ENCODE measurements at regions of chr5 and their contacts with region 1.

Region 1: GRCh38 chr5:39177631-39177964 is 41.8 kb downstream of the FYB1 start:
- DNase-seq: peak in 2 of 9 experiments; percentile 73 to 86
- ATAC-seq: peak; percentile 64
- H3K4me3 ChIP-seq: peak overlapping the region; percentile 20 to 36
- H3K4me3 Mint-ChIP-seq: peak overlapping the region; percentile 63
- H3K27ac ChIP-seq: peak overlapping the region; percentile 62 to 76
- H3K27ac Mint-ChIP-seq: peak overlapping the region; percentile 96
- H3K4me1 ChIP-seq: peaks cover 96% of the 10 kb centered on the region
- H3K4me1 Mint-ChIP-seq: peaks cover 96% of the 10 kb centered on the region
- H3K27me3 ChIP-seq: no peaks in the 10 kb centered on the region
- H3K27me3 Mint-ChIP-seq: no peaks in the 10 kb centered on the region
- CTCF ChIP-seq: no peak

Region 2: GRCh38 chr5:39158127-39158593 is 19.4 kb before region 1 on chr5:
- CTCF ChIA-PET with region 1: interaction called, 3 read pairs
- POLR2A ChIA-PET with region 1: interaction called, 13 read pairs
- intact Hi-C with region 1: loop called (anchors 2 kb)
- DNase-seq: no peak
- ATAC-seq: no peak
- H3K4me3 ChIP-seq: no peak overlapping the region
- H3K4me3 Mint-ChIP-seq: peak overlapping the region; percentile 16
- H3K27ac ChIP-seq: no peak overlapping the region
- H3K27ac Mint-ChIP-seq: peak overlapping the region; percentile 86
- H3K4me1 ChIP-seq: peaks cover 83% of the 10 kb centered on the region
- H3K4me1 Mint-ChIP-seq: peaks cover 86% of the 10 kb centered on the region
- H3K27me3 ChIP-seq: no peaks in the 10 kb centered on the region
- H3K27me3 Mint-ChIP-seq: no peaks in the 10 kb centered on the region
- CTCF ChIP-seq: no peak

Region 3: GRCh38 chr5:39164529-39165402 is 12.8 kb before region 1 on chr5:
- CTCF ChIA-PET with region 1: interaction called, 5 read pairs
- POLR2A ChIA-PET with region 1: interaction called, 13 read pairs
- intact Hi-C with region 1: loop called (anchors 1 kb)
- DNase-seq: peak in 2 of 9 experiments; percentile 56 to 70
- ATAC-seq: peak; percentile 73
- H3K4me3 ChIP-seq: no peak overlapping the region
- H3K4me3 Mint-ChIP-seq: peak overlapping the region; percentile 55
- H3K27ac ChIP-seq: peak overlapping the region; percentile 9 to 65
- H3K27ac Mint-ChIP-seq: peak overlapping the region; percentile 91
- H3K4me1 ChIP-seq: peaks cover 93% of the 10 kb centered on the region
- H3K4me1 Mint-ChIP-seq: peaks cover 90% of the 10 kb centered on the region
- H3K27me3 ChIP-seq: no peaks in the 10 kb centered on the region
- H3K27me3 Mint-ChIP-seq: no peaks in the 10 kb centered on the region
- CTCF ChIP-seq: no peak

Region 4: GRCh38 chr5:39187831-39188731 is 10.5 kb after region 1 on chr5:
- CTCF ChIA-PET with region 1: interaction called, 17 read pairs
- POLR2A ChIA-PET with region 1: interaction called, 183 read pairs
- intact Hi-C with region 1: loop called (anchors 1 kb)
- DNase-seq: peak in 4 of 9 experiments; percentile 47 to 66 (median 56)
- ATAC-seq: peak; percentile 53
- H3K4me3 ChIP-seq: peak overlapping the region; percentile 6 to 29
- H3K4me3 Mint-ChIP-seq: peak overlapping the region; percentile 75
- H3K27ac ChIP-seq: peak overlapping the region; percentile 51 to 88
- H3K27ac Mint-ChIP-seq: peak overlapping the region; percentile 98
- H3K4me1 ChIP-seq: peaks cover 90% of the 10 kb centered on the region
- H3K4me1 Mint-ChIP-seq: peaks cover 90% of the 10 kb centered on the region
- H3K27me3 ChIP-seq: no peaks in the 10 kb centered on the region
- H3K27me3 Mint-ChIP-seq: no peaks in the 10 kb centered on the region
- CTCF ChIP-seq: no peak

Region 5: GRCh38 chr5:39194466-39195136 is 17.0 kb after region 1 on chr5:
- CTCF ChIA-PET with region 1: interaction called, 28 read pairs
- POLR2A ChIA-PET with region 1: interaction called, 183 read pairs
- intact Hi-C with region 1: loop called (anchors 2 kb)
- DNase-seq: peak in 1 of 9 experiments; percentile 41
- ATAC-seq: no peak
- H3K4me3 ChIP-seq: peak overlapping the region; percentile 12 to 28
- H3K4me3 Mint-ChIP-seq: peak overlapping the region; percentile 77
- H3K27ac ChIP-seq: peak overlapping the region; percentile 41 to 88
- H3K27ac Mint-ChIP-seq: peak overlapping the region; percentile 94
- H3K4me1 ChIP-seq: peaks cover 72% of the 10 kb centered on the region
- H3K4me1 Mint-ChIP-seq: peaks cover 76% of the 10 kb centered on the region
- H3K27me3 ChIP-seq: no peaks in the 10 kb centered on the region
- H3K27me3 Mint-ChIP-seq: no peaks in the 10 kb centered on the region
- CTCF ChIP-seq: no peak

Region 6: GRCh38 chr5:39202597-39203274 is 25.1 kb after region 1 on chr5:
- CTCF ChIA-PET with region 1: interaction called, 13 read pairs
- POLR2A ChIA-PET with region 1: interaction called, 47 read pairs
- intact Hi-C with region 1: no loop called
- DNase-seq: peak in 4 of 9 experiments; percentile 49 to 77 (median 64)
- ATAC-seq: peak; percentile 58
- H3K4me3 ChIP-seq: peak overlapping the region; percentile 48 to 75
- H3K4me3 Mint-ChIP-seq: peak overlapping the region; percentile 93
- H3K27ac ChIP-seq: peak overlapping the region; percentile 70 to 88
- H3K27ac Mint-ChIP-seq: peak overlapping the region; percentile 96
- H3K4me1 ChIP-seq: peaks cover 48% of the 10 kb centered on the region
- H3K4me1 Mint-ChIP-seq: peaks cover 57% of the 10 kb centered on the region
- H3K27me3 ChIP-seq: no peaks in the 10 kb centered on the region
- H3K27me3 Mint-ChIP-seq: no peaks in the 10 kb centered on the region
- CTCF ChIP-seq: no peak

Region 7: GRCh38 chr5:39209924-39210323 is 32.3 kb after region 1 on chr5:
- CTCF ChIA-PET with region 1: interaction called, 15 read pairs
- POLR2A ChIA-PET with region 1: interaction called, 43 read pairs
- intact Hi-C with region 1: loop called in 1 of 2 experiments (anchors 5 kb)
- DNase-seq: peak; percentile 61 to 94 (median 83)
- ATAC-seq: peak; percentile 76
- H3K4me3 ChIP-seq: peak overlapping the region; percentile 12 to 49
- H3K4me3 Mint-ChIP-seq: peak overlapping the region; percentile 68
- H3K27ac ChIP-seq: peak overlapping the region; percentile 65 to 88
- H3K27ac Mint-ChIP-seq: peak overlapping the region; percentile 96
- H3K4me1 ChIP-seq: peaks cover 97% of the 10 kb centered on the region
- H3K4me1 Mint-ChIP-seq: peaks cover 95% of the 10 kb centered on the region
- H3K27me3 ChIP-seq: no peaks in the 10 kb centered on the region
- H3K27me3 Mint-ChIP-seq: no peaks in the 10 kb centered on the region
- CTCF ChIP-seq: no peak

Region 8: DNA sequence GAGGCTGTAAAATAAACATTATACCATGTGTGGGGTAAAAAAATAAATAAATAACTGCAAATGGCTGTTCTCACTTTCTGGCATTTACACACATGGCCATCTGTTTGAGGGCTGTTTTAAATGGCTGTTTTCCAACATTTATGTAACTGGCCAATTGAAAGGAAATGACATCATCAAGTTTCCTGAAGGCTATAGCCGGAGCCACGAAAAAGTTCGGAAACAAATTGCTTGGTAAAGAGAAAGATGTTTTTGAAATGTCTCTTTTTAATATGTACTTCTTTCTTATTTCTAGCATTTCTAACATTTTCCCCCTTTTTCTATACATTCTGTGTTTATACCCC is 342.6 kb after region 1 on chr5:
- CTCF ChIA-PET with region 1: no interaction called
- POLR2A ChIA-PET with region 1: no interaction called
- intact Hi-C with region 1: no loop called
- DNase-seq: no peak
- ATAC-seq: no peak
- H3K4me3 ChIP-seq: no peak overlapping the region
- H3K4me3 Mint-ChIP-seq: no peak overlapping the region
- H3K27ac ChIP-seq: no peak overlapping the region
- H3K27ac Mint-ChIP-seq: no peak overlapping the region
- H3K4me1 ChIP-seq: no peaks in the 10 kb centered on the region
- H3K4me1 Mint-ChIP-seq: no peaks in the 10 kb centered on the region
- H3K27me3 ChIP-seq: no peaks in the 10 kb centered on the region
- H3K27me3 Mint-ChIP-seq: peaks cover 12% of the 10 kb centered on the region
- CTCF ChIP-seq: no peak